Caco-2 (cell line): ENCODE measurements at regions of chr13 and their contacts with region 1.

Region 1: GRCh38 chr13:26377038-26377437 is 123.1 kb downstream of the CDK8 start:
- DNase-seq: peak; percentile 43 to 57
- H3K4me3 ChIP-seq: no peak overlapping the region
- H3K4me3 Mint-ChIP-seq: no peak overlapping the region
- H3K27ac Mint-ChIP-seq: no peak overlapping the region
- H3K4me1 ChIP-seq: 0 out of 2 replicates have a peak, but pooled peaks cover 4% of the 10 kb centered on the region
- H3K4me1 Mint-ChIP-seq: no peaks in the 10 kb centered on the region
- H3K27me3 ChIP-seq: no peaks in the 10 kb centered on the region
- H3K27me3 Mint-ChIP-seq: no peaks in the 10 kb centered on the region
- CTCF ChIP-seq: peak; percentile 47 to 68

Region 2: GRCh38 chr13:24644036-24644435 is 1733.0 kb before region 1 on chr13:
- CTCF ChIA-PET with region 1: no interaction called
- POLR2A ChIA-PET with region 1: no interaction called
- intact Hi-C with region 1: no loop called
- DNase-seq: no peak
- H3K4me3 ChIP-seq: no peak overlapping the region
- H3K4me3 Mint-ChIP-seq: no peak overlapping the region
- H3K27ac Mint-ChIP-seq: no peak overlapping the region
- H3K4me1 ChIP-seq: no peaks in the 10 kb centered on the region
- H3K4me1 Mint-ChIP-seq: no peaks in the 10 kb centered on the region
- H3K27me3 ChIP-seq: no peaks in the 10 kb centered on the region
- H3K27me3 Mint-ChIP-seq: no peaks in the 10 kb centered on the region
- CTCF ChIP-seq: no peak

Region 3: DNA sequence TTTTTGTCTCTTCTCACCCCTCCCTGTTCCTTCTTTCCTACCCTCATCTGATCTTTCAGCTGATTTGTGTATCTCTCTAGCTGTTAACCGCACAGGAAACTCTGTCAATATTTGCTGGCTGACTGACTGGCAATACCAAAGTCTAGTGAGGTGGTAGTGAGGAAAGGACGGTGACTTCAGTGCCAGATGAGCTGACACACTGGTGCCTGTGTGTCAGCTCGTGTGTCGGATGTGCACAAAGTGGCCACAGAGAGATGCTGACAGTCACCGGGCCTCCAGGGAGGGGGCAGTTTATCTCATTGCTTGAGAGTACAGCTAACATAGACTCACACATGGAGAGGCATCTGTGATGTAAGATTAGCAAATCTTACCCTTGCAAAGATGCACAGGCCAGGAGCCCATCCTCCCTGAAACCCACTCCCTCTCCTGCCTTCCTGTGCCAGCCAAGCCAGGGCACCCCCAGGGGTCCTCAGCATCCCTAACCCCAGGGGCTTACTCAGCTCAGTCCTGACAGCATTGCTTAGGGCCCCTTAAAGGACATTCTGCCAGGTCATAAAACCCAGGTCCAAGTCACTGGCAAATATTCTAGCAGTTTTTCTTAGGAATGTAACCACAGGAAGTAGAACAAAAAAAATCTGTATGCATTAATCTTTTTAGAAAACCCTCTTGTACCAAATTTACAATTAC is 405.4 kb before region 1 on chr13:
- CTCF ChIA-PET with region 1: no interaction called
- POLR2A ChIA-PET with region 1: no interaction called
- intact Hi-C with region 1: no loop called
- DNase-seq: peak in 1 of 2 experiments; percentile 13
- H3K4me3 ChIP-seq: no peak overlapping the region
- H3K4me3 Mint-ChIP-seq: no peak overlapping the region
- H3K27ac Mint-ChIP-seq: peak overlapping the region; percentile 40
- H3K4me1 ChIP-seq: peaks cover 39% of the 10 kb centered on the region
- H3K4me1 Mint-ChIP-seq: peaks cover 39% of the 10 kb centered on the region
- H3K27me3 ChIP-seq: no peaks in the 10 kb centered on the region
- H3K27me3 Mint-ChIP-seq: no peaks in the 10 kb centered on the region
- CTCF ChIP-seq: no peak

Region 4: GRCh38 chr13:26412263-26412662 is 35.2 kb after region 1 on chr13:
- CTCF ChIA-PET with region 1: no interaction called
- POLR2A ChIA-PET with region 1: no interaction called
- intact Hi-C with region 1: no loop called
- DNase-seq: peak in 1 of 2 experiments; percentile 20
- H3K4me3 ChIP-seq: no peak overlapping the region
- H3K4me3 Mint-ChIP-seq: no peak overlapping the region
- H3K27ac Mint-ChIP-seq: no peak overlapping the region
- H3K4me1 ChIP-seq: peaks cover 18% of the 10 kb centered on the region
- H3K4me1 Mint-ChIP-seq: peaks cover 15% of the 10 kb centered on the region
- H3K27me3 ChIP-seq: no peaks in the 10 kb centered on the region
- H3K27me3 Mint-ChIP-seq: no peaks in the 10 kb centered on the region
- CTCF ChIP-seq: no peak

Region 5: GRCh38 chr13:26449058-26449848 is 72.2 kb after region 1 on chr13:
- CTCF ChIA-PET with region 1: interaction called, 4 read pairs
- POLR2A ChIA-PET with region 1: no interaction called
- intact Hi-C with region 1: loop called (anchors 5 kb)
- DNase-seq: peak; percentile 20 to 55
- H3K4me3 ChIP-seq: no peak overlapping the region
- H3K4me3 Mint-ChIP-seq: no peak overlapping the region
- H3K27ac Mint-ChIP-seq: no peak overlapping the region
- H3K4me1 ChIP-seq: no peaks in the 10 kb centered on the region
- H3K4me1 Mint-ChIP-seq: no peaks in the 10 kb centered on the region
- H3K27me3 ChIP-seq: no peaks in the 10 kb centered on the region
- H3K27me3 Mint-ChIP-seq: peaks cover 5% of the 10 kb centered on the region
- CTCF ChIP-seq: no peak